Sciatic nerve (tissue), 2 donors: ENCODE measurements at regions of chr11 and their contacts with region 1.

Region 1: GRCh38 chr11:96342961-96343711 is at the start of gene MAML2:
- DNase-seq: peak; percentile 95
- ATAC-seq: peak; percentile 90
- total RNA-seq, gene MAML2: 30.4 TPM

Region 2: DNA sequence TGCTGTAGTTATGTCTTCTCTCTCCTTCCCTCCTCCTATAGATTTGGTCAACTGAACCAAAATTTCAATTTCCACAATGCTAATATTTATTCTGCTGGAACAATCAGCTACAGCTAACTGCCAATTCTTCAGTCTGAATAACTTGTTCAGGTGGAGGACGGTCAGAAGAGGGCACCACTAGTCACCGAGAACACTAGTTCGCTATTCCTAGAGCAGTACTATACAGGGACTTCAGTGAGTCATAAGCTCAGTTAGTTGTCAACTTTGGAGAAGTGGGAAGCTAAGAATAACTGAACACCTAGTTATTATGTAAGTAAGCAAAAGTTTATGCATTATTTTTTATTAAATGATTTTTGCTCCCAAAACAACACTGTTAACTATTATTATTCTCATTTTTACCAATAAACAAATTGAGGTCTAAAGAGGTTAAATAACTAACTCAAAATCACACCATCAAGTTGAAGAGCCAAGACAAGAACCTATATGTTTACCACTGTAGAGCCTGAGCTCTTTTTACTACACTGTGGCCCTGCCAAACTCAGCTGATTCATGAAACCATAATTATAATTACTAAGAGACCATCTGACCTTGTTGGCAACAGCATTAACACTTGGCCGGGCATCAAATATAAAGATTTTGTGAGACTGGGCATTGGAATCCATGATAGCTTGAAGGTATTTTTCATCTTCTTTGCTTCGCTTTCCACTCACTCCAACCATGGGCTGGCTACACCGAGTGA is 493.9 kb before region 1 on chr11:
- intact Hi-C with region 1: loop called (anchors 10 kb)
- DNase-seq: no peak
- ATAC-seq: peak; percentile 89

Region 3: GRCh38 chr11:96054870-96055705 is 288.0 kb before region 1 on chr11:
- intact Hi-C with region 1: loop called (anchors 1 kb)
- DNase-seq: no peak
- ATAC-seq: peak; percentile 71

Region 4: DNA sequence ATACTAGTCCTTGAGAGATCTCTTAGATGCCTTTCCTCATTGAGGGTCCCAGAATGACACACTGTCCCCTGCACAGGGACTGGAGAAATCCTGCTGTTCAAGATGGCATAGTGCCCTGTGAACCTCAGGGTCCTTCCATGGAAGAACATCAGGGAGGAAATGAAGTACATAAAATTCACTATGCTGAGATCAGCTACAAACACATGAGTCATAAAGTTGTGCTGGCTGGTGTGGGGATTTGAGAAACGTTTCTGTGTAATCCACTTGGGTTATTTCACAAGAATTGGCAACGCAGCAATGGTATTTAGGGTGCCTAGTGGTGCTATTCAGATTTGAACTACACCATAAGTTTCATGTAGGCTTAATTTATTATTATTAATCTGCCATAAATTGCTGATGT is 174.5 kb before region 1 on chr11:
- intact Hi-C with region 1: loop called (anchors 10 kb)
- DNase-seq: no peak
- ATAC-seq: peak; percentile 90

Region 5: DNA sequence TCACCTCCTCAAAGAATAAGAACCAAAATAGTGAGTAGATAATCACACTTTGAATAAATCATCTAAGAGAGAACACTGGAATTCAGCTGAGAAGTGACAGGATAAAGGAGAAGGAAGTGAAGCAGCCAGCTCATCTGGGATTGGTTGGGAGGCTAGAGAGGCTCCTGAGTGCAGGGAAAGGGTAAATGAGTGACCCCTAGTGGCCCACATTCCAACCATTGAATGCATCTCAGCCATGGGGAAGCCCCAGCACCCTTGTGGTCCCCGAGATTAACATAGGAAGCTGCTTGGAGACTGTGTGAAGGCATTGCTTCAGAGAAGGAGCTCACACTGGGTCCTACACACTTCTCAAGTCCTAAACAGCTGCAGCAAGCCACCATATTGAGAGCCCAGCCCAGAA is 128.9 kb after region 1 on chr11:
- intact Hi-C with region 1: no loop called
- DNase-seq: no peak
- ATAC-seq: no peak